AG04449 (cell line): ENCODE measurements at regions of chr6 and their contacts with region 1.

Region 1: GRCh38 chr6:160534050-160534696 is 129.9 kb downstream of the LPA start:
- DNase-seq: no peak
- H3K4me3 ChIP-seq: no peak overlapping the region
- CTCF ChIP-seq: peak; percentile 78

Region 2: GRCh38 chr6:160520043-160520904 is 13.9 kb before region 1 on chr6:
- CTCF ChIA-PET with region 1: interaction called, 98 read pairs
- POLR2A ChIA-PET with region 1: no interaction called
- DNase-seq: no peak
- H3K4me3 ChIP-seq: peak overlapping the region; percentile 65
- CTCF ChIP-seq: no peak